ENCODE measurements at regions of chr3 and their contacts with region 1.

Region 1: DNA sequence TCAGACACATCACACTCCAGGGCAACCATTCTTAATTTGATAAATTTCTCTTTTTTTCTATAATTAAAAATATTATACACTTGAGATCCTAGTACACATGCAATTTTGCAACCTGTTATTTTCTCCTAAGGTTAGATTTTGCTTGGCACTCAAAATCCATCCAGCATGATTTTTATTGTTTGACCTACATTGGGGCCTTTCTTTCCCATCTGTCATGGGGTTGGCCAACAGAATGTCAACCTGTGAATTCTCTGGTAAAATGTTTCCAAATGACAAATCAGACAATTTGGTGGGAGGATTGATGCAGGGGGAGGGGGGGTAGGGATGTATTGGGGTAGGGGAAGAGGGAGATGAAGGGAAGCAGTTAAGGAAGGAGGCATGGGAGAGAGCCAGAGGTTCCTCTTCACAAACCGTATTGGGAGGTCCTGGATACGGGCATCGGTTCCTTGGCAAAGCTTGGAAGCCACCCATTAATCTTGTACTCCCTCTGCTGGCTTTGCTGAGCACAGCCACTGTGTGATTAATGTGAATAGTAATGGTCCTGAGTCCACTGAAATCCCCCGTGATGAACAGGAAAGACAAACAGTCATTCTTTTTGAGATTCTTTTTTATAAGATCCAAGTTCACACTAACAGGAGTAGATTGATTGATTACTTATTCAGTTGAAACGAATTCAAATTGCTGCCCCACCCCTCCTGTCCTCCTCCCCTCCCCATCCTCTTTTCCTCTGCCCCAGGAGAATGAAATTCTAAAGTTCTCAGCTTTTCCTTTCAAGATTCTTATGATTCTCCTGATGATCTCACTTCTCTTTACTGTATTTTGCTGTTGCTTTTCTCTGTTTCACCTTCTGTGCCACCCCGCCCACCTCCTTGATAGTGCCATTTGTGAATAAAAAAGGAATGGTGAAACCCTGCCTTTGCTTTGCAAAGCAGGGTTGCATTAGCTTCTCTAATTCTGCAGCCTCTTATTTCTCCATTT is 82.2 kb upstream of the SLC25A26 start:
- DNase-seq: peak; percentile 55 to 69
- H3K4me3 ChIP-seq: no peak overlapping the region
- H3K4me3 Mint-ChIP-seq: no peak overlapping the region
- H3K27ac Mint-ChIP-seq: no peak overlapping the region
- H3K4me1 ChIP-seq: peaks cover 9% of the 10 kb centered on the region
- H3K4me1 Mint-ChIP-seq: peaks cover 15% of the 10 kb centered on the region
- H3K27me3 ChIP-seq: no peaks in the 10 kb centered on the region
- H3K27me3 Mint-ChIP-seq: no peaks in the 10 kb centered on the region
- CTCF ChIP-seq: peak; percentile 56 to 70

Region 2: DNA sequence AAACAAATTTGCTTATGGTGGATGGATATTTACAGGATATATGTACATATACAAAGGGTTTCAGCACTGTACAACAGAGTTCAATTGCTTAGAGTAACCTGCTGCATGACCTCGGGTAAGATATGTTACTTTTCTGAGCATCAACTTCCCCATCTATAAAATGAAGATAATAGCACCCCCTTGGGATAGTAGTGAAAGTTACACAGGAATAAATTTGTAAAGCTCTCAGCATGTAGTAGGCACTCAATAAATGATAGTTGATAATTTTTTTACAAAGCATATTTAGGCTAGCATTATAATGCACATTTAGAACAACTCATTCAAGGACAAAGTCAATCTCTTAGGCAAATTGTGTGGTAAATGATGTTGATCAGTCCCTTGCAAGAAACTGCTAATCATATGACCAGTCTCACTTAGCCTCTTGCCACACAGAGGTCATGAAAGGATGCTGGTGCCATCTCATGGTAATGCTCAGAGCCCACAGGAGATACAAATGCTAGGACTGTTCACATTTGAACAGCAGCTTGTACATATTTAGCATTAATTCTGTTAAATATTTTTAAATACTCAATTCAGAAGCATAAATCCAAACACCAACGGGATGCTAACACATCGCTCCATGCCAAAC is 223.8 kb before region 1 on chr3:
- CTCF ChIA-PET with region 1: no interaction called
- POLR2A ChIA-PET with region 1: no interaction called
- intact Hi-C with region 1: loop called (anchors 1 kb)
- DNase-seq: no peak
- H3K4me3 ChIP-seq: no peak overlapping the region
- H3K4me3 Mint-ChIP-seq: no peak overlapping the region
- H3K27ac Mint-ChIP-seq: no peak overlapping the region
- H3K4me1 ChIP-seq: no peaks in the 10 kb centered on the region; the same call in 1 of the 2 replicates
- H3K4me1 Mint-ChIP-seq: peaks cover 8% of the 10 kb centered on the region
- H3K27me3 ChIP-seq: no peaks in the 10 kb centered on the region
- H3K27me3 Mint-ChIP-seq: no peaks in the 10 kb centered on the region
- CTCF ChIP-seq: peak in 1 of 2 experiments; percentile 5

Region 3: DNA sequence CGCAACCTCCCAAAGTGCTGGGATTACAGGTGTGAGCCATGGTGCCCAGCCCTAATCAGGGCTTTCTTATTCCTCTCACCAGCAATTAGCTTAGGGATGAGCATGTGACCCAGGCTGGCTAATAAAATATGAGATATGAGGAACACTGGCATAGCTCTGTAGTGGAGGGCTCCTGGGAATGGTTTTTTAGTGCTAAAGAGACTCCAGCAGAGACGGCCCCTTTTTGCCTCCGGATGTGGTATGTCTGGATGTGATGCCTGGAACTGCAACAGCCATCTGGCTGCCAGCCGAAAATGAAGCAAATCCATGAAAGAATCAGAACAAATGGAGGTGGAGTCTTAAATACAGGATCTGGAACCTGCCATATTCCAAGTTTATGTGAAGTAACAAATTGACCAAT is 30.8 kb before region 1 on chr3:
- CTCF ChIA-PET with region 1: no interaction called
- POLR2A ChIA-PET with region 1: no interaction called
- intact Hi-C with region 1: no loop called
- DNase-seq: no peak
- H3K4me3 ChIP-seq: no peak overlapping the region
- H3K4me3 Mint-ChIP-seq: no peak overlapping the region
- H3K27ac Mint-ChIP-seq: no peak overlapping the region
- H3K4me1 ChIP-seq: 0 out of 2 replicates have a peak, but pooled peaks cover 3% of the 10 kb centered on the region
- H3K4me1 Mint-ChIP-seq: no peaks in the 10 kb centered on the region
- H3K27me3 ChIP-seq: no peaks in the 10 kb centered on the region
- H3K27me3 Mint-ChIP-seq: no peaks in the 10 kb centered on the region
- CTCF ChIP-seq: no peak